CD4-positive, alpha-beta memory T cell (primary cell): ENCODE measurements at regions of chr1 and their contacts with region 1.

Region 1: DNA sequence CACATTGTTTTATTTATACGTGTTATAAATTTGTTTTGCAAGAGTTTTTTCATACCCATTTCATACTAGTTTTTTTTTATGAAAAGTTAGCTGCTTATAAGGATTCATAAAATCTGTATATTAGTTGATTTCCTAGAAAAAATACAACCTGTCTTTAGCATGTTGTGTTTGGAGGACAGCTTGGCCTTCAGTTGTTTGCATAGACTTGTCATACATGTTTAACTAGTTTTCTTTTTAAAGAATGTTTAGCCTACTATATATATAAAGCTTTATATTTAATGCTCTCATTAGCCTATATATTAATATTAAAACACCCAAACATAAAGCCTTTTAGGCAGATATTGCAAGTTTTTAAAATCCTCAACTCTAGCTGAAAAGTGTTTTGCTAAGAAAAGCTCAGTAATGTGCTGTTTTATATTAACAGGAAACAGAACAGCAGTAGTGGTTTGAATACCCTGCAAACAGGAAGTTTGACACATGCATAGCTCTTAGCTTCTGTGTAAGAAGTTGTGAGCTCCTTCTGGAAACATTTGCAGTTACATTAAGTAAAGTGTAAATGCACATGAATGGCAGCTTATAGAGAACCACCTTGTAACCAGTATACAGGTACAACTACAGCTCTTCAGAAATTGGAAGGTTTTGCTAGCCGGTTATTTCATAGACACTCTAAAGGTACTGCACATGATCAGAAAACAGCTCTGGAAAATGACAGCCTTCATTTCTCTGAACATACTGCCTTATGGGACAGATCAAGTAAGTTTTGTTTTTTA is at the start of gene PRKACB:
- DNase-seq: peak; percentile 52 to 68 (median 58)
- H3K4me3 ChIP-seq: peak within 1 kb of the TSS; percentile 49 to 93
- H3K4me3 Mint-ChIP-seq: peak within 1 kb of the TSS; percentile 94 to 100 (median 98)
- H3K27ac ChIP-seq: peak within 1 kb of the TSS; percentile 54
- H3K27ac Mint-ChIP-seq: peak within 1 kb of the TSS; percentile 91 to 99 (median 97)
- H3K4me1 ChIP-seq: peaks cover 44% of the 10 kb centered on the region
- H3K4me1 Mint-ChIP-seq: peaks cover 22 to 57% (median 30%) of the 10 kb centered on the region in 4 donors
- H3K27me3 ChIP-seq: no peaks in the 10 kb centered on the region
- H3K27me3 Mint-ChIP-seq: no peaks in the 10 kb centered on the region
- total RNA-seq, gene PRKACB: 128 to 131 TPM

Region 2: GRCh38 chr1:84181350-84182005 is 37.5 kb after region 1 on chr1:
- CTCF ChIA-PET with region 1: interaction called, 7 read pairs
- POLR2A ChIA-PET with region 1: interaction called, 4 read pairs
- intact Hi-C with region 1: loop called (anchors 2 kb)
- DNase-seq: no peak
- H3K4me3 ChIP-seq: no peak overlapping the region
- H3K4me3 Mint-ChIP-seq: no peak overlapping the region
- H3K27ac ChIP-seq: no peak overlapping the region
- H3K27ac Mint-ChIP-seq: peak overlapping the region in 3 of 7 donors; percentile 6 to 20 (median 18)
- H3K4me1 ChIP-seq: peaks cover 5% of the 10 kb centered on the region
- H3K4me1 Mint-ChIP-seq: peaks cover 12 to 19% (median 15%) of the 10 kb centered on the region in 4 donors
- H3K27me3 ChIP-seq: no peaks in the 10 kb centered on the region
- H3K27me3 Mint-ChIP-seq: no peaks in the 10 kb centered on the region

Region 3: DNA sequence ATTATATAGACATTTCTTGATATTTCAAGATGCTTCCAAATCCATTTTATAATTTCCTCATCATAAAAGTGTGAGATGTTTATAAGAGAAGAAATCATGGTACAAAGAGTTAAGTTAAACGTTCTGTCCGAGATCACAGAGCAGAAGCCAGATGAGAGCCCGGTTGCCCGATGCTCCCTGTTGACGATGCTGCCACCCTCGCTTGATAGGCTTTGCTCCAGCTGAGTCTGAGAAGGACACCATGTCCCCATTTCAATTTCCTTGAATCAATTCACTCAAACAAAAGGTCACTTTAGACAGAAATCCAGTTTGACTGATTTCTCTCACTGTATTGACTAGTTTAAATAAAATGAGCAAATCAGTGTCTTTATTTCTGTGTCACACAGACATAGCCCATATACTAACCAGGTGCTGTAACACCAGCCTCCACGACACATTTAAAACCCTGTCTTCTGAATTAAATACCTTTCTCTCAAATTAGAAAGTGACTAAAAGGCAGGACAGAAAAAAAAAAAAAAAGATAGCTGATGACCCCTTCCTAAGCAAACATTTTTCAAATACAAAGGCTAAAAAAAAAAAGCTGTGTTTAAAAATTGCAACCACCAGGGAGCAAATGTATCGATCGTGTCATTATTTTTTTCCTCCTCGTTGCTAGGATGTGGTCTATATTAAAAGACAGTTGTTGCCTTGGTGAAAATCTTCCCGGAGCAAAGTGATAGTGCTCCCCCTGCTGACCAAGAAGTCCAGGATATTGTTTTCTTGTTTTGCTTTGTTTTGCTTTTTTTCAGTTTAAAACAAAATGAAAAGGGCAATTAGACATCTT is 289.5 kb after region 1 on chr1:
- CTCF ChIA-PET with region 1: interaction called, 266 read pairs
- POLR2A ChIA-PET with region 1: interaction called, 95 read pairs
- intact Hi-C with region 1: loop called (anchors 1 kb)
- DNase-seq: peak; percentile 67 to 83 (median 81)
- H3K4me3 ChIP-seq: peak overlapping the region in 1 of 2 donors; percentile 20
- H3K4me3 Mint-ChIP-seq: peak overlapping the region; percentile 65 to 82 (median 76)
- H3K27ac ChIP-seq: peak overlapping the region; percentile 54
- H3K27ac Mint-ChIP-seq: peak overlapping the region in 1 of 7 donors; percentile 88
- H3K4me1 ChIP-seq: peaks cover 36% of the 10 kb centered on the region
- H3K4me1 Mint-ChIP-seq: peaks cover 8 to 15% (median 12%) of the 10 kb centered on the region in 4 donors
- H3K27me3 ChIP-seq: no peaks in the 10 kb centered on the region
- H3K27me3 Mint-ChIP-seq: no peaks in the 10 kb centered on the region

Region 4: DNA sequence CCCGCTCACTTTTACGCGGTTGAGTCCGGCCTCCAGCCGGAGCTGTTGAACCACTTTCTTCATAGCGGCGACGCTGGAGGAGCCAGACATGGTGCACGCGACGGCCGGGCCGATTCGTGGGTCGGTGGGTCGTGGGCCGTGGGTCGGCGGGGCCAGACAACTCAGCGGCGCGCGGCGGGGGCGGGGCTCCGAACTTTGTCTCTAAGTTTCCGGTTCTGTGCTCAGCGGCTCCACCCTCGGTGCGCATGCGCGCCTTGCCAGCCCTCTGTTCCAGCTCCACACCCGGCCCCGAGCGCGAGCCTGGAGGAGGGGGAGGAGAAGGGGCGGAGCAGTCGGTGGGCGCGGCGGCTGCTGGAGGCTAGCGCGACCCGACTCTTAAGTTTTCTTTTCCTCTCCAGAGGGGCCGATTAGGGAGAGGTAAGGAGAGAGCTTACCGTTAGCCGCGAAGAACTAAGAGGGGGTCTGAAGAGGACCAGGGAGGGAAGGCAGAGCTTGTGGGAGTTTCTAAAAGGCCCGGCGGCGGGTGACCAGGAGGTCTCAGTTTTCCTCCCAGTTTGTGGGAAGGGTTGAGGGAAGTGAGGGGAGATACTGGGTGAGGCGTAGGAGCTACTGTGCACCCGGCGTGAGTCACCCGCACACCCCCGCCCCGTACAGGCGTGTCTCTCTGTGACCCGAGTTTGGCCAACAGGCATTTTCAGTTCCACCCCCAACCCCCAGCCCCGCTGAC is 362.2 kb after region 1 on chr1 and contains the starts of genes GNG5 and SPATA1:
- CTCF ChIA-PET with region 1: interaction called, 11 read pairs
- POLR2A ChIA-PET with region 1: interaction called, 29 read pairs
- intact Hi-C with region 1: loop called (anchors 1 kb)
- DNase-seq: peak; percentile 94 to 97 (median 96)
- H3K4me3 ChIP-seq: peak within 1 kb of the TSS; percentile 68 to 87
- H3K4me3 Mint-ChIP-seq: peak within 1 kb of the TSS; percentile 92 to 99 (median 98)
- H3K27ac ChIP-seq: peak within 1 kb of the TSS; percentile 81
- H3K27ac Mint-ChIP-seq: peak within 1 kb of the TSS; percentile 93 to 99 (median 97)
- H3K4me1 ChIP-seq: peaks cover 47% of the 10 kb centered on the region
- H3K4me1 Mint-ChIP-seq: peaks cover 28 to 55% (median 34%) of the 10 kb centered on the region in 4 donors
- H3K27me3 ChIP-seq: no peaks in the 10 kb centered on the region
- H3K27me3 Mint-ChIP-seq: no peaks in the 10 kb centered on the region
- total RNA-seq, gene GNG5: 38.1 to 45.5 TPM
- total RNA-seq, gene SPATA1: 1.7 to 3.4 TPM

Region 5: DNA sequence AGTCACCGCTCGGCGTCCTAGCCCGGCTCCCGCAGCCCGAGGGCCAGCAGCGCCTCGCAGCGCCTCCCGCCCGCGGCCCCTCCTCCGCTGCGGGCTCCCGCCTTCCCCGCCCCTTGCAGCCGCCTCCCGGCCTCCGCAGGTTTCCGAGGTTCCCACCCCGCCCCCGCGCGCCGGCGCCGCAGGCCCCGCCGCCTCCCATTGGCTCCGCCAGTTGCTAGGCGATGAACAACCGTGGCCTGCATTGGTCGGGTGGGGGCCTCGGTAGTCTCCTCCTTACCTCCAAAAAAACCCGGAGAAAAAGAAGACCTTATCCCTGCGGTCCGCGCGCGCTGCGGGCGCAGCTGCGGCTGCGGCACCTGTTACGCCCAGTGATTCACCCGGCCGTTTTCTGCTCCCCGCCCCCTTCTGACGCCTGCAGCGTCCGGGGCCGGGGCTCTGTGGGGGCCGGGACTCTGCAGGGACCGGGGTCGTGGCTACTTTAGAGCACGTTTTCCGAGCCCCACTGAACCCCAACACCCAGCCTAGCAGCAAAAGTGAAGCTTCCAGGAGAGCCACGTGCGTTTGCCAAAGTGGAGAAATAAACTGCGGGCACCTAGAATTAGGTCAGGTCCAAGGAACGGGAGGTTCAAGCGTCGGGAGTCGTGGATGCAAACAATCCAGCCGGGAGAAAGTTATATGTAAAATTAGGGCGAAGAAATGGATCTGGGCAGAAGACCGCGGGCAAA is 546.6 kb after region 1 on chr1 and contains the start of gene SSX2IP:
- CTCF ChIA-PET with region 1: interaction called, 3 read pairs
- POLR2A ChIA-PET with region 1: interaction called, 23 read pairs
- intact Hi-C with region 1: loop called (anchors 1 kb)
- DNase-seq: peak; percentile 98 to 100 (median 99)
- H3K4me3 ChIP-seq: peak within 1 kb of the TSS; percentile 28 to 79
- H3K4me3 Mint-ChIP-seq: peak within 1 kb of the TSS; percentile 87 to 96 (median 92)
- H3K27ac ChIP-seq: peak within 1 kb of the TSS; percentile 87
- H3K27ac Mint-ChIP-seq: peak within 1 kb of the TSS; percentile 90 to 99 (median 97)
- H3K4me1 ChIP-seq: peaks cover 37% of the 10 kb centered on the region
- H3K4me1 Mint-ChIP-seq: peaks cover 45 to 69% (median 45%) of the 10 kb centered on the region in 4 donors
- H3K27me3 ChIP-seq: no peaks in the 10 kb centered on the region
- H3K27me3 Mint-ChIP-seq: no peaks in the 10 kb centered on the region
- total RNA-seq, gene SSX2IP: 7.5 to 8.3 TPM

Region 6: DNA sequence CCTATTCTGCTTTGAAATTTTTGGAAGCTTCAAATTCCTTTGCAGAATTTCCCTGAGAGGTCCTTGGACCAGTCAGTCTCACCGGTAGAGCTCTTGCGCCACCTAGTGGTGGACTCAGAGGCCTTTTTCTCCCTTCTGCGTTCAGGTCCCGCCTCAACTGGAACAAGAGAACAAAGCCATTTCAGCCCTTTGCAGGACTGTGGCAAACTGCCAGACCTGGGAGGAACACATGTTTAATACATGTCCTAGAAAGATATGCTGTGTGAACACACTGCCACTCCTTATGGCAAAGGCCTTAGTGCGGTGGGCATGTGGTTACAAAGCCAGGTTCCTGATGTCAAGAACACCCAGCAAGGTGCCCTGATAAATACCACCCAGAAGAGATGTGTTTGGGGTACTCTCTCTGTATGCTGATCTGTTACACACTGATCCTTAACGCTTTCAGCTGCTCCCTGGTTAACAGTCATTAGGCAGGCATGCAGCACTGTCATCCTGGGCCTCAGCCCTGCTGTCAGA is 628.5 kb after region 1 on chr1:
- CTCF ChIA-PET with region 1: interaction called, 12 read pairs
- POLR2A ChIA-PET with region 1: interaction called, 4 read pairs
- intact Hi-C with region 1: loop called (anchors 1 kb)
- DNase-seq: peak; percentile 52 to 66 (median 64)
- H3K4me3 ChIP-seq: no peak overlapping the region
- H3K4me3 Mint-ChIP-seq: no peak overlapping the region
- H3K27ac ChIP-seq: no peak overlapping the region
- H3K27ac Mint-ChIP-seq: peak overlapping the region in 1 of 7 donors; percentile 15
- H3K4me1 ChIP-seq: no peaks in the 10 kb centered on the region
- H3K4me1 Mint-ChIP-seq: peaks cover 0 to 5% (median under 1%) of the 10 kb centered on the region in 4 donors
- H3K27me3 ChIP-seq: no peaks in the 10 kb centered on the region
- H3K27me3 Mint-ChIP-seq: peaks cover 7 to 10% of the 10 kb centered on the region in 2 donors